Dendritic cell treated with granulocyte-macrophage colony-stimulating factor and Interleukin-4, amounts not matched to agents 40 ng/mL and 50 ng/mL, for 4 days (primary cell): ENCODE measurements at regions of chr2 and their contacts with region 1.

Region 1: GRCh38 chr2:231227309-231228162 is 29.1 kb downstream of the ARMC9 start:
- H3K4me3 Mint-ChIP-seq: no peak overlapping the region
- H3K27ac Mint-ChIP-seq: peak overlapping the region; percentile 41
- H3K4me1 Mint-ChIP-seq: no peaks in the 10 kb centered on the region
- H3K27me3 Mint-ChIP-seq: no peaks in the 10 kb centered on the region

Region 2: GRCh38 chr2:231104115-231104713 is 123.3 kb before region 1 on chr2:
- intact Hi-C with region 1: loop called (anchors 5 kb)
- H3K4me3 Mint-ChIP-seq: no peak overlapping the region
- H3K27ac Mint-ChIP-seq: no peak overlapping the region
- H3K4me1 Mint-ChIP-seq: no peaks in the 10 kb centered on the region
- H3K27me3 Mint-ChIP-seq: no peaks in the 10 kb centered on the region

Region 3: GRCh38 chr2:231297108-231297908 is 69.8 kb after region 1 on chr2:
- intact Hi-C with region 1: loop called (anchors 5 kb)
- H3K4me3 Mint-ChIP-seq: no peak overlapping the region
- H3K27ac Mint-ChIP-seq: peak overlapping the region; percentile 17
- H3K4me1 Mint-ChIP-seq: peaks cover 54% of the 10 kb centered on the region
- H3K27me3 Mint-ChIP-seq: peaks cover 3% of the 10 kb centered on the region

Region 4: GRCh38 chr2:231411831-231412617 is 184.5 kb after region 1 on chr2:
- intact Hi-C with region 1: loop called (anchors 2 kb)
- H3K4me3 Mint-ChIP-seq: peak overlapping the region; percentile 58
- H3K27ac Mint-ChIP-seq: no peak overlapping the region
- H3K4me1 Mint-ChIP-seq: peaks cover 9% of the 10 kb centered on the region
- H3K27me3 Mint-ChIP-seq: peaks cover 39% of the 10 kb centered on the region

Region 5: GRCh38 chr2:231452799-231453508 is 225.4 kb after region 1 on chr2:
- intact Hi-C with region 1: loop called (anchors 1 kb)
- H3K4me3 Mint-ChIP-seq: no peak overlapping the region
- H3K27ac Mint-ChIP-seq: peak overlapping the region; percentile 32
- H3K4me1 Mint-ChIP-seq: no peaks in the 10 kb centered on the region
- H3K27me3 Mint-ChIP-seq: no peaks in the 10 kb centered on the region